PC-3 (cell line): ENCODE measurements at regions of chr11 and their contacts with region 1.

Region 1: DNA sequence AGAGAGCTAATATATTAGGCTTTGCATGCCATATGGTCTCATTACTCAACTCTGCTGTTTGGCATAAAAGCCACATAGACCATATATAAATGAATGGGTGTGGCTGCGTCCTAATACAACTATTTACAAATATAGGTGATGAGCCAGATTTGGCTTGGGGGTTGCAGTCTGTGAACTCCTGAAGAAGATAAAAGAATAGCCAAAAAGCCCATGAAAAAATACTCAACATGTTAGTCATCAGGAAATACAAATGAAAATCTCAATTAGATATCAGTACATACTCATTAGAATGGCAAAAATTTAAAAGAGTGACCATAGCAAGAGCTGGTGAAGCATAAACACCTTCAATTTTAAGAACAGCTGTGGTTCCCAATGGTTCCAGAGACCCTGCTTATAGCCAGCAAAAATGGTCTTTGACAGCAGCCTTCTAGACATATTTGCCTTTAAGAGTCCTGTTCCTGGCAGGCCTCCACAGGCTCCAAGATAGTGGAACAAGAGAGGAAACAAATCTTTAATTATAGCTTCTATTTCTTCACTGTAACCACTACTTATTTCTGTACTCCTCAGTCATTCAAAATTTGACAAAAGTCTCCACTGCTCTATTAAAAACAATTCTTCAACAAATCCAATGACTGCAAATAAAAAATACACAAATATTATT is 16.1 kb downstream of the C2CD3 start:
- DNase-seq: peak; percentile 98
- ATAC-seq: peak; percentile 84
- H3K4me3 ChIP-seq: peak overlapping the region; percentile 15; the same call in 1 of the 2 replicates
- H3K27ac ChIP-seq: peak overlapping the region; percentile 86
- H3K4me1 ChIP-seq: peaks cover 40% of the 10 kb centered on the region
- H3K27me3 ChIP-seq: no peaks in the 10 kb centered on the region
- CTCF ChIP-seq: no peak

Region 2: GRCh38 chr11:74112877-74113276 is 41.9 kb before region 1 on chr11:
- CTCF ChIA-PET with region 1: no interaction called
- POLR2A ChIA-PET with region 1: no interaction called
- intact Hi-C with region 1: no loop called
- DNase-seq: no peak
- ATAC-seq: no peak
- H3K4me3 ChIP-seq: no peak overlapping the region
- H3K27ac ChIP-seq: no peak overlapping the region
- H3K4me1 ChIP-seq: no peaks in the 10 kb centered on the region
- H3K27me3 ChIP-seq: no peaks in the 10 kb centered on the region
- CTCF ChIP-seq: no peak

Region 3: GRCh38 chr11:74138572-74138971 is 16.2 kb before region 1 on chr11:
- CTCF ChIA-PET with region 1: no interaction called
- POLR2A ChIA-PET with region 1: no interaction called
- intact Hi-C with region 1: loop called (anchors 1 kb)
- DNase-seq: peak; percentile 100
- ATAC-seq: peak; percentile 90
- H3K4me3 ChIP-seq: peak overlapping the region; percentile 47
- H3K27ac ChIP-seq: peak overlapping the region; percentile 91
- H3K4me1 ChIP-seq: peaks cover 65% of the 10 kb centered on the region
- H3K27me3 ChIP-seq: no peaks in the 10 kb centered on the region
- CTCF ChIP-seq: no peak